CD4-positive, alpha-beta memory T cell (primary cell): ENCODE measurements at regions of chr6 and their contacts with region 1.

Region 1: GRCh38 chr6:26020329-26021000 is 57.9 kb downstream of the TRIM38 start:
- DNase-seq: peak; percentile 85 to 92 (median 91)
- H3K4me3 ChIP-seq: peak overlapping the region; percentile 82 to 87
- H3K4me3 Mint-ChIP-seq: peak overlapping the region; percentile 92 to 98 (median 96)
- H3K27ac ChIP-seq: peak overlapping the region; percentile 96
- H3K27ac Mint-ChIP-seq: peak overlapping the region; percentile 96 to 100 (median 100)
- H3K4me1 ChIP-seq: peaks cover 29% of the 10 kb centered on the region
- H3K4me1 Mint-ChIP-seq: peaks cover 14 to 58% (median 32%) of the 10 kb centered on the region in 4 donors
- H3K27me3 ChIP-seq: no peaks in the 10 kb centered on the region
- H3K27me3 Mint-ChIP-seq: peaks cover 0 to 1% of the 10 kb centered on the region in 2 donors

Region 2: GRCh38 chr6:25962149-25963127 is 58.0 kb before region 1 on chr6 and contains the start of gene TRIM38:
- CTCF ChIA-PET with region 1: interaction called, 5 read pairs
- POLR2A ChIA-PET with region 1: interaction called, 41 read pairs
- intact Hi-C with region 1: loop called (anchors 1 kb)
- DNase-seq: peak; percentile 82 to 95 (median 87)
- H3K4me3 ChIP-seq: peak within 1 kb of the TSS; percentile 66 to 90
- H3K4me3 Mint-ChIP-seq: peak within 1 kb of the TSS; percentile 98 to 100 (median 98)
- H3K27ac ChIP-seq: peak within 1 kb of the TSS; percentile 92
- H3K27ac Mint-ChIP-seq: peak within 1 kb of the TSS; percentile 92 to 100 (median 99)
- H3K4me1 ChIP-seq: peaks cover 84% of the 10 kb centered on the region
- H3K4me1 Mint-ChIP-seq: peaks cover 64 to 93% (median 79%) of the 10 kb centered on the region in 4 donors
- H3K27me3 ChIP-seq: no peaks in the 10 kb centered on the region
- H3K27me3 Mint-ChIP-seq: no peaks in the 10 kb centered on the region
- total RNA-seq, gene TRIM38: 37.7 TPM

Region 3: GRCh38 chr6:26743157-26743821 is 722.8 kb after region 1 on chr6:
- CTCF ChIA-PET with region 1: no interaction called
- POLR2A ChIA-PET with region 1: no interaction called
- intact Hi-C with region 1: no loop called
- DNase-seq: no peak
- H3K4me3 ChIP-seq: no peak overlapping the region
- H3K4me3 Mint-ChIP-seq: peak overlapping the region in 1 of 8 donors; percentile 4
- H3K27ac ChIP-seq: no peak overlapping the region
- H3K27ac Mint-ChIP-seq: peak overlapping the region in 3 of 7 donors; percentile 53 to 92 (median 84)
- H3K4me1 ChIP-seq: no peaks in the 10 kb centered on the region
- H3K4me1 Mint-ChIP-seq: no peaks in the 10 kb centered on the region
- H3K27me3 ChIP-seq: peaks cover 16% of the 10 kb centered on the region
- H3K27me3 Mint-ChIP-seq: peaks cover 34% of the 10 kb centered on the region in 2 donors